Posterior cingulate gyrus (tissue), 11 donors: ENCODE measurements at regions of chr11 and their contacts with region 1.

Region 1: GRCh38 chr11:129695575-129696308 is 119.9 kb upstream of the TMEM45B start:
- DNase-seq: peak in 8 of 10 donors; percentile 24 to 91 (median 54)

Region 2: GRCh38 chr11:129364143-129364654 is 331.5 kb before region 1 on chr11:
- intact Hi-C with region 1: loop called (anchors 5 kb)
- DNase-seq: peak; percentile 52 to 96 (median 72)

Region 3: DNA sequence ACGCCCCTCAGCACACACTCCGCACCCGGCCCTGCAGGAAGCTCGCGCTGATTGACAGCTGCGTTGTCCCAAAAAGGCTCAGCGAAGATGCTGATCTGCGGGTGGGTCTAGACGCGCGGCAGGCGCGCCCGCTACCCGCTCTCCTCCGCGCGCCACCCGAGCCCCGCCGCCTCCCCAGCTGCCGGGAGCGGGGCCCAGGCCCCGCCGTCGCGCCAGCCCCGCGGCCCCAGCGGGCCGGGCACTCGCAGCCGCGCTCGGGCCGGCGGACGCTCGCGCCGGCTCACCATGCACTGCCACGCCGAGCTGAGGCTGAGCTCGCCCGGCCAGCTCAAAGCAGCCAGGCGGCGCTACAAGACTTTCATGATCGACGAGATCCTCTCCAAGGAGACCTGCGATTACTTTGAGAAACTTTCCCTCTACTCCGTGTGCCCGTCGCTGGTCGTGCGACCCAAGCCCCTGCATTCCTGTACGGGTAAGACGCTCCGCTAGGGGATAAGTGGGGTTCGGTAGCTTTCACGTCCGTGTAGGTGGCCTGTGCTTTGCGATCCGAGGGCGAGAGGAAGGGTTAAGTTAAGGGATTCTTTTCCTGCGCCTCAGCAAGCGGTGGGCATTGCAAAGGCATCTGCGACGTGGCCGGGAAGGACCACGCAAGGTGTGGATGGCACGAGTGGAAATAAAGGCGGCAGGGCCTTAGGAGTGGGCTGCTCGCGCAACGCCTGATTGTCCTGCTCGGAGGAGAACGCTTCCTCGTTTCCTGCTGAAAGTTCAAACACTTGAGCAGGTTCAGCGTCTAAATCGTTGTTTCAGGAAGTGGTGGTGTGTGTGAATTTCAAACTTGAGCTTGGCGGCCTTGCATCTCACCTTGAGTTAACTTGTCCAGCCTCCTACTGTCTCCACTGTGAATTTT is 319.7 kb before region 1 on chr11 and contains the start of gene BARX2:
- intact Hi-C with region 1: loop called (anchors 5 kb)
- DNase-seq: peak in 8 of 10 donors; percentile 27 to 90 (median 52)

Region 4: GRCh38 chr11:129596351-129596750 is 99.4 kb before region 1 on chr11:
- intact Hi-C with region 1: no loop called
- DNase-seq: no peak